ENCODE measurements at regions of chr5 and their contacts with region 1.

Region 1: DNA sequence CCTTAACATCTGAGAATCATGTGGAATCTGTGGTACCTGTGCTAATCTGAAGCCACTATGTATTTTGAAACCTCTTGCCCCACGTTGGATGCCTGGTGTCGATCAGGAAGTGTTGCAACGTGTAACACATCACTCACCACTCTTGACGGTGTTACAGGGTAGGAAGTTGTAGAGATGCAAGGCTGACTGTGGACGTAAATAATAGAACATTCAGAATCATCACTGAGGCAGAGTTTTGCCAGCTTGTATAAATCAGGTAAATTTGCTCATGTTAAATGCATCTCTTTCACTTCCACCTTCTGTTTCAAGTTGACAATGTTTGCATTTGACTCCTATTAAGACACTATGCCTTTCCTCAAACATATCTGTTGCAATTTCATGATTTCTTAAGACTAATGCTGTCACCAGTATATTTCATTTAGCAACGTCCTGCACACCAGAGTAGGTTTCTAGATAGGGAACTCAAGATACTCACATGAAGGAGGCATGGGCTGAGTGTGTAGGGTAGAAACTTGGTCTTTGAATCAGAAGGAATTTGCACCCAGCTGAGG is 38.1 kb downstream of the BASP1 start:
- DNase-seq: peak; percentile 87 to 93 (median 93)
- H3K4me3 ChIP-seq: peak overlapping the region; percentile 13 to 60 (median 50)
- H3K4me3 Mint-ChIP-seq: peak overlapping the region; percentile 61 to 81
- H3K27ac ChIP-seq: peak overlapping the region; percentile 69 to 81
- H3K27ac Mint-ChIP-seq: peak overlapping the region; percentile 95 to 97 (median 96)
- H3K4me1 ChIP-seq: peaks cover 50 to 62% of the 10 kb centered on the region in 2 donors
- H3K4me1 Mint-ChIP-seq: peaks cover 61% of the 10 kb centered on the region
- H3K27me3 ChIP-seq: no peaks in the 10 kb centered on the region
- H3K27me3 Mint-ChIP-seq: no peaks in the 10 kb centered on the region
- CTCF ChIP-seq: no peak

Region 2: DNA sequence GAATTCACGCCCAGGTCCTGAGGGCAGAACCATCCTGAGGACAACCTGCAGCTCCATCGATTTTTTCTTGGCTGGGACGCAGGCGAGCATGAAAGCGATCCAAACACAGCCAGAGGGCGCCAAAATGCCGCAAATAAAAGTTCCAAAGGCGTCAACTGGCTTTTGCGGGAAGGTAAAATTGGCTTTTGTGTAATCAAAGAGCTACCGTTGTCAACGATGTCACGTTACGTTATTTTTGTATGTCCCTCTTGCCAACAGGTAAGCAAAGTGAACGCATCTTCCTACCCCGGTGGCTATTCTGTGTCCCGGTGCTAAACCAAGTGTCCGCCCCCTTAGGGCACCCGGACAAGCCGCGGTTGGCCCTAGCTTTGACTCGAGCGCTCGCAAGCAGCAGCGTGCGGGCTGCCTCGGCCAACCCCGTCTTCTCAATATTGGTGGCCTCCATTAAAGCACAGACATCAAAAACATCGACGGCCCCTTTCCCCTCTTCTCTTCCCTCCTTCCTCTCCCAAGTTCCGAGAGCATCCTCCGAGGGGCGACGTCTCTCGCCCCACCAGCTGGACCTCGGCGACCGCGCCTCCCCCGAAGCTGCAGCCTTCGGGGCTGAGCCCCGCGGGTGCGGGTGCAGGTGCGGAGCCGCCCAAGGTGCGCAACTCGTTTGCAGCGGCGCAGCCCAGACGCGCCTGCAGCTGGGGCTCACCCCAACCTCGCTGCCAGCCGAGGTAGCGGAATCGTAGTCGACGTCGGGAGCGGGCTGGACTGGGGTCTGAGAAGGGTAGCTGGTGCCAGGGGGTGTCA is 39.2 kb before region 1 on chr5:
- intact Hi-C with region 1: loop called (anchors 5 kb)
- DNase-seq: peak; percentile 69 to 76 (median 73)
- H3K4me3 ChIP-seq: peak overlapping the region; percentile 42 to 92 (median 52)
- H3K4me3 Mint-ChIP-seq: peak overlapping the region; percentile 86 to 92
- H3K27ac ChIP-seq: no peak overlapping the region
- H3K27ac Mint-ChIP-seq: peak overlapping the region; percentile 23 to 86 (median 69)
- H3K4me1 ChIP-seq: peaks cover 20 to 25% of the 10 kb centered on the region in 2 donors
- H3K4me1 Mint-ChIP-seq: peaks cover 29% of the 10 kb centered on the region
- H3K27me3 ChIP-seq: no peaks in the 10 kb centered on the region
- H3K27me3 Mint-ChIP-seq: peaks cover 1 to 4% (median 3%) of the 10 kb centered on the region in 3 donors
- CTCF ChIP-seq: peak; percentile 85

Region 3: DNA sequence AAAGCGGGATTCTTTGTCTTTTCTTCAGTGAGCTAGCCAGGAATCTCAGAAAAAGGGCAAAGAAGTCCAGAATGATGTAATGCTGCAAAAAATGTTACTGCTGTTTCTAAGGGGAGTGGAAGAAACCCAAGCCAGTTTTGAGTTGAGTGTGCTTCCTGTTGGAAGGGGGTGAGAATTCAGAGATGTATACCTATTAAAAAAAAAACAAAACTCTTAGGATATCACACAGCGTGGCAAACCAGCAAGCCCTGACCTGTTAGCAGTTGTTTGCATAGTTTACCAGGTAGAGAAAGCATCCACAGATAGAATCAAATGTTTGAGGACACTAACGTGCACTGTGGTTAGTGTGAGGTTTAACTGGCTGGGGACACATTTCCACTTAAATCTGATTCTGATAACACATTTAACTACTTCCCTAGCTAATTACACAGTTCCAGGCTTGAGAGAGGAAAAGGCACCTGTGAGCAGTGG is 26.7 kb before region 1 on chr5:
- intact Hi-C with region 1: loop called in 1 of 2 experiments (anchors 5 kb)
- DNase-seq: peak in 1 of 3 donors; percentile 35
- H3K4me3 ChIP-seq: no peak overlapping the region
- H3K4me3 Mint-ChIP-seq: no peak overlapping the region
- H3K27ac ChIP-seq: peak overlapping the region in 1 of 2 donors; percentile 13
- H3K27ac Mint-ChIP-seq: peak overlapping the region in 6 of 7 donors; percentile 5 to 79 (median 52)
- H3K4me1 ChIP-seq: peaks cover 19 to 24% of the 10 kb centered on the region in 2 donors
- H3K4me1 Mint-ChIP-seq: peaks cover 54% of the 10 kb centered on the region
- H3K27me3 ChIP-seq: no peaks in the 10 kb centered on the region
- H3K27me3 Mint-ChIP-seq: no peaks in the 10 kb centered on the region
- CTCF ChIP-seq: no peak

Region 4: GRCh38 chr5:17305964-17306716 is 50.6 kb after region 1 on chr5:
- intact Hi-C with region 1: loop called (anchors 1 to 10 kb)
- DNase-seq: no peak
- H3K4me3 ChIP-seq: no peak overlapping the region
- H3K4me3 Mint-ChIP-seq: no peak overlapping the region
- H3K27ac ChIP-seq: no peak overlapping the region
- H3K27ac Mint-ChIP-seq: peak overlapping the region in 1 of 7 donors; percentile 58
- H3K4me1 ChIP-seq: peaks cover 32 to 40% of the 10 kb centered on the region in 2 donors
- H3K4me1 Mint-ChIP-seq: peaks cover 33% of the 10 kb centered on the region
- H3K27me3 ChIP-seq: no peaks in the 10 kb centered on the region
- H3K27me3 Mint-ChIP-seq: peaks cover 0 to 3% (median 0%) of the 10 kb centered on the region in 3 donors
- CTCF ChIP-seq: no peak

Region 5: GRCh38 chr5:17359451-17360011 is 104.0 kb after region 1 on chr5:
- intact Hi-C with region 1: loop called in 1 of 2 experiments (anchors 5 kb)
- DNase-seq: peak; percentile 55 to 85 (median 71)
- H3K4me3 ChIP-seq: no peak overlapping the region
- H3K4me3 Mint-ChIP-seq: no peak overlapping the region
- H3K27ac ChIP-seq: peak overlapping the region in 1 of 2 donors; percentile 33
- H3K27ac Mint-ChIP-seq: peak overlapping the region in 5 of 7 donors; percentile 11 to 88 (median 72)
- H3K4me1 ChIP-seq: peaks cover 12 to 16% of the 10 kb centered on the region in 2 donors
- H3K4me1 Mint-ChIP-seq: peaks cover 22% of the 10 kb centered on the region
- H3K27me3 ChIP-seq: no peaks in the 10 kb centered on the region
- H3K27me3 Mint-ChIP-seq: peaks cover 0 to 7% (median 2%) of the 10 kb centered on the region in 3 donors
- CTCF ChIP-seq: no peak

Region 6: DNA sequence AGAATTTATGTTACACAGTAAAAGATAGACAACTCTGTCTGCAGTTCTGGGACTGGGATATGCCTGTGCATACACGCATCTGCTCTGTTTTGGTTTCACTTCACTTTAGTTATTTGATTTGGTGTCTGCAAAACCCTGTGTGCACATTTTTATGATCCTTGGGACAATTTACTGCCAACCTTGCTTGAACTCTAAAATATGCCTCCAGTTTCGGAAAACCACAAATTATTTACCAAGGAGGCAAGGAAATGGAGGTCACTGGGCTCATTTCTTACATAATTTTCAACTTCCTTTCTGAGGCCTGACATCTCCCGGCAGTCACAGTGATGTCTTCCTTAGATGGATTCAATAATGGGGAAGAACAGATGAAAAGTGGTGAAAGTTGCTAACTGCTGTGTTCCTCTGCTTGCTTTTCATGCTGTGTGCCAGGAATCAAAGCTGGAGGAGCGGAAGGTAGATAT is 181.2 kb after region 1 on chr5:
- intact Hi-C with region 1: loop called in 1 of 2 experiments (anchors 10 kb)
- DNase-seq: peak; percentile 59 to 70 (median 69)
- H3K4me3 ChIP-seq: peak overlapping the region; percentile 26 to 74 (median 59)
- H3K4me3 Mint-ChIP-seq: peak overlapping the region; percentile 68 to 83
- H3K27ac ChIP-seq: peak overlapping the region; percentile 11 to 88
- H3K27ac Mint-ChIP-seq: peak overlapping the region; percentile 84 to 96 (median 90)
- H3K4me1 ChIP-seq: peaks cover 28 to 30% of the 10 kb centered on the region in 2 donors
- H3K4me1 Mint-ChIP-seq: peaks cover 29% of the 10 kb centered on the region
- H3K27me3 ChIP-seq: no peaks in the 10 kb centered on the region
- H3K27me3 Mint-ChIP-seq: peaks cover 0 to 4% (median 2%) of the 10 kb centered on the region in 3 donors
- CTCF ChIP-seq: no peak